ENCODE measurements at regions of chr1 and their contacts with region 1.

Region 1: GRCh38 chr1:5915587-5916571 is 76.3 kb downstream of the NPHP4 start:
- DNase-seq: peak in 5 of 7 donors; percentile 29 to 61 (median 43)
- H3K4me3 ChIP-seq: no peak overlapping the region
- H3K27ac ChIP-seq: no peak overlapping the region
- H3K4me1 ChIP-seq: peaks cover 0 to 4% of the 10 kb centered on the region in 2 donors
- H3K27me3 ChIP-seq: no peaks in the 10 kb centered on the region
- CTCF ChIP-seq: peak; percentile 47 to 72 (median 62)
- POLR2A ChIP-seq: no peak

Region 2: GRCh38 chr1:5637171-5637570 is 278.7 kb before region 1 on chr1:
- intact Hi-C with region 1: loop called in 1 of 2 experiments (anchors 5 kb)
- DNase-seq: peak in 6 of 7 donors; percentile 47 to 72 (median 60)
- H3K4me3 ChIP-seq: no peak overlapping the region
- H3K27ac ChIP-seq: no peak overlapping the region
- H3K4me1 ChIP-seq: no peaks in the 10 kb centered on the region
- H3K27me3 ChIP-seq: peaks cover 7% of the 10 kb centered on the region
- CTCF ChIP-seq: peak; percentile 28 to 66 (median 50)
- POLR2A ChIP-seq: no peak

Region 3: GRCh38 chr1:5856246-5856815 is 59.5 kb before region 1 on chr1:
- intact Hi-C with region 1: no loop called
- DNase-seq: peak in 5 of 7 donors; percentile 26 to 42 (median 30)
- H3K4me3 ChIP-seq: peak overlapping the region in 1 of 4 donors; percentile 27
- H3K27ac ChIP-seq: no peak overlapping the region
- H3K4me1 ChIP-seq: no peaks in the 10 kb centered on the region
- H3K27me3 ChIP-seq: no peaks in the 10 kb centered on the region
- CTCF ChIP-seq: no peak
- POLR2A ChIP-seq: no peak

Region 4: DNA sequence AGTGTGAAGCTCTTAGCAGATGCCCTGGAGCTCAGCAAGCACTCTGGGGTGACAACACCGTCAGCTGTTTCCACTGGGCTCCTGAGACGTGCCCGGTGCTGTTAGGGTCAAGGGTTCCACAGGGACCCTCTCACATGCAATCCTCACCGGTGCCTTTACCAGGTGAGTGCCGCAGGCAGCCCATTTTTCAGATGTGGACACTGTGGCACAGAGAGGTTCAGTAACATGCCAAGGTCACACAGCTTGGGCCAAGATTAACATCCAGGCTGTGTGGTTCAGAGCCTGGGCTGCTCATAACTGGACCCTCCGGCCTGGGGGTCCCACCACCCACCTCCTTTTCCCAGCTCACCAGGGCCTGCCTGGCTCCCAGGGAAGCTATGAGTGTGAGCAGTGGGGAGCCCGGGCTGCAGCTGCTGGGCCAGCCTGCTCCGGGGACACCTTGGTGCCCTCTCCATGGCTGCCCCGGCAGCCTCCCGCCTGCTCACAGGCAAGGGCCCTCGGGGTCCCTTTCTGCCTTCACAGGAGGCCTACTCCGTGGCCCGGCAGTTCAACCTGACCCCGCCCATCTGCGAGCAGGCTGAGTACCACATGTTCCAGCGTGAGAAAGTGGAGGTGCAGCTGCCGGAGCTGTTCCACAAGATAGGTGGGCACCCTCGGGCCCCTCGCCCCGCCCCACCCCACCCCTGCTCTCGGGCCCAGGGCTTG is 179.1 kb after region 1 on chr1:
- intact Hi-C with region 1: no loop called
- DNase-seq: no peak
- H3K4me3 ChIP-seq: no peak overlapping the region
- H3K27ac ChIP-seq: no peak overlapping the region
- H3K4me1 ChIP-seq: no peaks in the 10 kb centered on the region
- H3K27me3 ChIP-seq: no peaks in the 10 kb centered on the region
- CTCF ChIP-seq: no peak
- POLR2A ChIP-seq: no peak

Region 5: GRCh38 chr1:6280761-6281451 is 365.0 kb after region 1 on chr1:
- intact Hi-C with region 1: no loop called
- DNase-seq: peak in 6 of 7 donors; percentile 59 to 77 (median 66)
- H3K4me3 ChIP-seq: no peak overlapping the region
- H3K27ac ChIP-seq: no peak overlapping the region
- H3K4me1 ChIP-seq: peaks cover 0 to 10% of the 10 kb centered on the region in 2 donors
- H3K27me3 ChIP-seq: no peaks in the 10 kb centered on the region
- CTCF ChIP-seq: peak; percentile 11 to 63 (median 49)
- POLR2A ChIP-seq: no peak